Sigmoid colon (tissue), 7 donors: ENCODE measurements at regions of chr21 and their contacts with region 1.

Region 1: GRCh38 chr21:41167348-41168342 is at the start of gene BACE2:
- DNase-seq: peak; percentile 93
- H3K4me3 ChIP-seq: peak within 1 kb of the TSS; percentile 64 to 95 (median 84)
- H3K27ac ChIP-seq: peak within 1 kb of the TSS; percentile 93 to 98 (median 95)
- H3K4me1 ChIP-seq: peaks cover 0 to 30% (median 27%) of the 10 kb centered on the region in 4 donors
- H3K27me3 ChIP-seq: no peaks in the 10 kb centered on the region
- CTCF ChIP-seq: peak in 3 of 4 experiments; percentile 31 to 61 (median 41)
- EP300 ChIP-seq: no peak
- POLR2A ChIP-seq: no peak
- total RNA-seq, gene BACE2: 52.1 to 204 (median 53.1) TPM

Region 2: DNA sequence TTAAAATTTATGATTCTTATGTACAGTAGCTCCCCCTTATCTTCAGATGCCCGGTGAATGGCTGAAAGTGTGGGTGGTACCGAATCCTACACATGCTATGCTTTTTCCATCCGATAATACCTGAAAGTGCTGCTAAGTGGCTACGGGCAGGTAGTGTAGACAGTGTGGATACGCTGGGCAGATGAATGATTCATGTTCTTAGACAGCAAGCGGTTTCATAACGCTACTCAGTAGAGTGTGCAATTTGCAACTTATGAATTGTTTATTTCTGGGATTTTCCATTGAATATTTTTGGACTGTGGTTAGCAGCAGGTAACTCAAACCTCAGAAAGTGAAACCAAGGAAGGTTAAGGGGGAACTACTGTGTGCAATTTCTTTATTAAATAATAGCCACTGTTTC is 1292.9 kb before region 1 on chr21:
- intact Hi-C with region 1: loop called (anchors 5 kb)
- DNase-seq: no peak
- H3K4me3 ChIP-seq: no peak overlapping the region
- H3K27ac ChIP-seq: peak overlapping the region in 1 of 4 donors; percentile 31
- H3K4me1 ChIP-seq: peaks cover 0 to 3% (median under 1%) of the 10 kb centered on the region in 4 donors
- H3K27me3 ChIP-seq: no peaks in the 10 kb centered on the region
- CTCF ChIP-seq: no peak
- EP300 ChIP-seq: no peak
- POLR2A ChIP-seq: no peak

Region 3: DNA sequence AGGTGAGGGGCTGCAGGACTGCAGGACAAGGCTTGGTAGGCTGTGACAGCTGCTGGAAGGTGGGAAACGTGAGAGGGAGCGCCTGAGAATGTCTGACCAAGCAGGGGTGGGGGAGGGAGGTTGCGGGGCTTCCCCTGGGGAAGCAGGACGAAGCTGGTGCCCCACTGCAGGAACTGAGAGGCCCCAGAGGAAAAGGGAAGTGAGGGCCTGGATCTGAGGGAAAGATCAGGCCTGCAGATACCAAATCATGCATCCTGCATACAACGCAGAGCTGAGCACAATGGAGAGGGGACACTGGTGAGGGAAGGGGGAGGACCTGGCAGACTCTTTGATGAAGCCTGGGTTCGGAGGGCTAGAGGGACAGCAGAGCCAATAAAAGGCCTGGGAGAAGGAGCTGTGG is 65.4 kb before region 1 on chr21:
- intact Hi-C with region 1: no loop called
- DNase-seq: no peak
- H3K4me3 ChIP-seq: no peak overlapping the region
- H3K27ac ChIP-seq: no peak overlapping the region
- H3K4me1 ChIP-seq: no peaks in the 10 kb centered on the region
- H3K27me3 ChIP-seq: peaks cover 0 to 18% (median 0%) of the 10 kb centered on the region in 3 donors
- CTCF ChIP-seq: no peak
- EP300 ChIP-seq: no peak
- POLR2A ChIP-seq: no peak

Region 4: DNA sequence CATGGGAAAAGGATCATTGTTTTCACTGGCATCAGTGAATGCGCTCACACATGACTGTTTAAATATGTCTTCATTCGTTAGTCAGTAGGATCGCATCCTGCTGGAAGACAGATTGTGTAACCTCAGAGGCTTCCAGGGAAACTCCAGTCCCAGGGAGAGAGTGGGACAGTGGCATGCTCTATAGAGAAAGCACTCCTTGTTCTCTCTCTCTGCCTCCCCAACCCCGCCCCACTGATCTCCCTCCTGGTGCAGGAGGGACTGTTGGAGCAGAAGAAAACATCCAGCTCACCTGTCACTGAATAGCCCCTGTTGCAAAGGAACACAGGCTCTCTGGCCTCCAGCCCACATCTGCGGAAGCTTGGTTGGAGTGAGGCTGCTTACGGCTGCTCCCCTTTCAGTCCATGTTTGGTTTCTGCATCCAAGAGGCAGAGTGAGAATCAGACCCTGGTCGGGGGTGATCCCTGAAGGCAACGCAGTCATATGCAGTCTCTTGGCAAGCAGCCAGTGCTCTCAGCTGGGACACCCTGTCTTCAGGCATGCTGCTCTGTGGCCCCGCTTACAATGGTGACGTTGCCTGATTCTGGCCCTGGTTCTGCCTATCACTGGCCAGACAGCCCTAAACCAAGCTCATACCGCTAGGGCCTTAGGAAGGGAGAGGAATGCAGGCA is 39.9 kb after region 1 on chr21:
- intact Hi-C with region 1: loop called (anchors 2 kb)
- DNase-seq: peak; percentile 89
- H3K4me3 ChIP-seq: peak overlapping the region in 3 of 4 donors; percentile 6 to 26 (median 14)
- H3K27ac ChIP-seq: peak overlapping the region; percentile 55 to 71 (median 65)
- H3K4me1 ChIP-seq: peaks cover 0 to 21% (median 18%) of the 10 kb centered on the region in 4 donors
- H3K27me3 ChIP-seq: no peaks in the 10 kb centered on the region
- CTCF ChIP-seq: no peak
- EP300 ChIP-seq: no peak
- POLR2A ChIP-seq: no peak

Region 5: DNA sequence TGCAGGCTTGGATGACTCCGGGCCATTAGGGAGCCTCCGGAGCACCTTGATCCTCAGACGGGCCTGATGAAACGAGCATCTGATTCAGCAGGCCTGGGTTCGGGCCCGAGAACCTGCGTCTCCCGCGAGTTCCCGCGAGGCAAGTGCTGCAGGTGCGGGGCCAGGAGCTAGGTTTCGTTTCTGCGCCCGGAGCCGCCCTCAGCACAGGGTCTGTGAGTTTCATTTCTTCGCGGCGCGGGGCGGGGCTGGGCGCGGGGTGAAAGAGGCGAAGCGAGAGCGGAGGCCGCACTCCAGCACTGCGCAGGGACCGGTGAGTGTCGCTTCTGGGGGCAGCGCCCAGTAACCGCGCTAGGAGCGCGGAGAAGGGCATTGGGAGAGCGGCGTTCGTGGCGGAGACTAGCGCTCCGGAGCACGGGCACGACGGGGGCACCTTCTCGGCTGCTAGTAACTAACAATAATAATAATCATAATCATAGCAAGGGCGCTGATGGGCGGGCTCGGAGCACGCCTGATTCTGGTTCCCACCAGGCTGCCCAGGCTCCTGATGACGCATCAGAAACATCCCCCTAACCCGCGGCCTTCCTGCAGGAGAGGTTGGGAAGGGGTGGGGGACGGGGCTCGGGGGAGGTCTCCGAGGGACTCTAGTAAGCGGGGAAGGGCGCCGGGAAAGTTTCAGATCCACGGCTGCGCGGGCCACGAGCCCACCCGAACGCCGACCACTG is 258.5 kb after region 1 on chr21 and contains the start of gene MX1:
- intact Hi-C with region 1: loop called (anchors 5 kb)
- DNase-seq: peak; percentile 84
- H3K4me3 ChIP-seq: peak within 1 kb of the TSS; percentile 63 to 78 (median 66)
- H3K27ac ChIP-seq: peak within 1 kb of the TSS; percentile 60 to 74 (median 68)
- H3K4me1 ChIP-seq: peaks cover 0 to 19% (median 8%) of the 10 kb centered on the region in 4 donors
- H3K27me3 ChIP-seq: no peaks in the 10 kb centered on the region
- CTCF ChIP-seq: no peak
- EP300 ChIP-seq: peak in 1 of 4 donors; percentile 11
- POLR2A ChIP-seq: peak; percentile 52 to 56
- total RNA-seq, gene MX1: 8.6 to 30.7 (median 26.7) TPM

Region 6: DNA sequence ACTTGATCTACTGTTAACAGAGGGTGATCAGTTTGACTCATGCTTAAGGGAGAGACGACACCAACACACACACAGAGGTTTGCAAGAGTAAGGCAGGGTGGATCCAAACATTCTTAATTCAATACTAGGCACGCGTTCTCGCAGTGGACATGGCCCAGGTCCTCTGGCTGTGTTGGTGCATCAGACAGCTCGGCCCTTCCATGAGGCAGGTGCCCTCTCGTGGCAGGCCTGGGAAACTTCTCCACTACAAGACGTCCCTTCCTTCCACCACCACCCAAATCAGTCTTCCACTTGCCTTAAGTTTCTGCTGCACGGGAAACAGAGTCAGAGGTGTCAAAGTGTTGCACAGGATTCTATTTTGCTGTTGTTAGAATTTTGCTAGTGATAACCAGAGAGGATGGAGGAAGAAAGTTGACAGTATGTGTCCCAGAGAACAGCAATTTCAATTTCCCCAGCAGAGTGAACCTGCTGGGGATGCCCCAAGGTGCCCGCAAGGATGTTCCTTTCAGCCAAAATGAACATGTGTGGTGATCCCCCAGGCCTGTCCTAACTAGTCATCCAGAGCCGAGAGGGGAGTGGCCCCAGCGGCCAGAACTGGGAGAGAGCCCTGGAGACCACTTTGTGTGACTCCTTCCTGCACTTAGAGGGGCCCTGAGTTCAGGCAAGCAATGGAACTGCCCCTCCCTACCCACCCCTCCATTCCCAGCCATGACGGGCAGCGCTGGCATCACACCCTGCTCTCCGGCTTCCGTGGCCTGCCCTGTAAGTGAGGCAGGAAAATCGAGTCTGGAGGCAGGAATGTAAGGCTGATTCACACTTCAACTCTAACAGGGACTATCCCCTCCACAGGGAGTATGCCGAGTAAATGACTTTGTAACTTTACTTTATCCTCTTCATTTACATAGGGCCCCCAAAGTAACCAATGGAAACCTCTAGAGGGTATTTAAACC is 293.2 kb after region 1 on chr21:
- intact Hi-C with region 1: loop called (anchors 1 kb)
- DNase-seq: peak; percentile 87
- H3K4me3 ChIP-seq: no peak overlapping the region
- H3K27ac ChIP-seq: no peak overlapping the region
- H3K4me1 ChIP-seq: peaks cover 0 to 7% (median 5%) of the 10 kb centered on the region in 4 donors
- H3K27me3 ChIP-seq: no peaks in the 10 kb centered on the region
- CTCF ChIP-seq: peak; percentile 47 to 78 (median 72)
- EP300 ChIP-seq: no peak
- POLR2A ChIP-seq: no peak

Region 7: GRCh38 chr21:41601573-41602368 is 434.1 kb after region 1 on chr21:
- intact Hi-C with region 1: no loop called
- DNase-seq: peak; percentile 40
- H3K4me3 ChIP-seq: no peak overlapping the region
- H3K27ac ChIP-seq: no peak overlapping the region
- H3K4me1 ChIP-seq: peaks cover 0 to 11% (median 9%) of the 10 kb centered on the region in 4 donors
- H3K27me3 ChIP-seq: peaks cover 0 to 20% (median 5%) of the 10 kb centered on the region in 3 donors
- CTCF ChIP-seq: no peak
- EP300 ChIP-seq: no peak
- POLR2A ChIP-seq: no peak